GM10248 (cell line): ENCODE measurements at regions of chr9 and their contacts with region 1.

Region 1: DNA sequence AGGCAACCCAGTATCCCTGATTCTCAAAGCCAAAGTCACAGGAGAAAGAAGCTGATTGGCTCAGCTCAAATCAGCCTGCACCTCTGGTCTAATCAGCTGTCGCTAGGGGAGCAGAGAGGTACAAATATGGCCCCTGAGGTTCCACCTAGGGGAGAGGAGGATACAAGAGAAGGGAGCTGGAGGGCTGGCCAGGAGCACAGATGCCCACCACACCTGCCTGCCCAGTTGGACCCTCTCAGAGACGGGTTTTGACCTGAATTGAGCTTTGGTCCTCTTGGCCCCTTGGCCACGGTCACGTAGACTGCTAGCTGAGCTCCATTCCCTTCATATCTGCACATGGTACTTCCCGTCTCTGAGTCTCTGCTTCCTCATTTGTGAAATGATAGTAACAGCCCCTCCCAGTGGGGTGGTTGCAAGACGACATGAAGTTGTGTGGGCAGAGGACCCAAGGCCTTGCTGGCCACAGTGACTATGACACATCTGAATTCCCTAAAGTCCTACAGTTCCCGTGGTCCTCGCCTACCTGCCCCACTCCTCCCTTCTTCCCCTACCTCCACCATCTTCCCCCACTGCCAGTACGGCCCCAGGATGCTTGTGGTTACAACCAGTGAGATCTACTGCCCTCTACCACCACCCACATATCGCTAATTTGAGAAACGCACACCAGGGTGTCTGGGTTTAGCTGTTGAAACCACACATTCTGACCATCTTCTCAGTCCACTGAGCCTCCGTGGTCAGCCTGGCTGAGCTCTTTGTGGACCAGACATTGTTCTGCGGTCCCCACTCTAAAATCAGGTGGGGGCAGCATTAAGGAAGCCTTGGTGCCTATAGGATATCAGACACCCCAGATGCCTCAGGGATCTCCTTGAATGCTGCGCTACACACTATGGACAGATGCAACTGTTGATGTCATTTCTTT is 60.3 kb upstream of the NEK6 start:
- DNase-seq: peak; percentile 75
- CTCF ChIP-seq: peak; percentile 17

Region 2: DNA sequence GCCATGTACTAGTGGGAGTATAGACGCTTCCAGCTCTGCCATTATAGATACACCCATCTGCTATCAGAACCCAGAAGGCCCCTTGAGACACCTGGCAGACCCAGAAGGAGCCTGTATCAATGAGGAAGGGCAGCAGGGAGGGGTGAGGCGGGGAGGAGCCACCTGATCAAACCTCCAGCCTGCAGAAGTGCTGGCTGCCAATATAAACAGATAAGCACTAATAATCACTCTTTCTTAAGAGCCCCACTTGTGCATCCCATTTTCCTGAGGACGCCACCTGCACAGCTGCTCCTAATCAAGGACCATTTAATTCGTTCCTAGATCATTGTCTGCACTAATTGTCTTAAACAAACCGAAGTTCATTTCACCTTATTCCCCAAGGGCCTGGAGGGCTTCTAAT is 14.7 kb before region 1 on chr9:
- CTCF ChIA-PET with region 1: interaction called, 15 read pairs
- POLR2A ChIA-PET with region 1: no interaction called
- DNase-seq: no peak
- CTCF ChIP-seq: no peak

Region 3: DNA sequence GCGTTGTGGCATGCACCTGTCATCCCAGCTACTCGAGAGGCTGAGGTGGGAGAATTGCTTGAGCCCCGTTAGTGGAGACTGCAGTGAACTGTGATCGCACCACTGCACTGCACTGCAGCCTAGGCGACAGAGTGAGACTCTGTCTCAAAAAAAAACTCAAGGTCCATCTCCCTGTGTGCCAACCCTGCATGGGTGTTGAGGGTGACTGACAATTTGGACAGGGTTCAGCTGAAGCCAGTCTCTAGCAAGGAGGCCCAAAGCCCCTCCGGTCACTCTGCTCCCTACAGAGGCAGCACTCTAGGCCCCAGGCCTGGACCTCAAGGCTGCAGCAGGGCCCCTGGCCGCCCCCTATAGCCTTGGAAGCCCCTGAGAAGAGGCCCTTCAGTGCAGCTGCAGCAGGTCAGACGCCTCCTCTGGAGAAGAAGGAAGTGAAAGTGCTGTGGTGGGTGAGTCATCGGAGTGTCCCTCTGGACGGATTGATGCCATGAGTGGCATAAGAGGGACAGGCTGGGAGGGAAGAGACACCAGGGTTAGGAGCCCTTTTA is 21.1 kb after region 1 on chr9:
- CTCF ChIA-PET with region 1: interaction called, 11 read pairs
- POLR2A ChIA-PET with region 1: interaction called, 3 read pairs
- DNase-seq: peak; percentile 85
- CTCF ChIP-seq: no peak

Region 4: GRCh38 chr9:124257844-124258606 is 60.6 kb after region 1 on chr9 and contains the start of gene NEK6:
- CTCF ChIA-PET with region 1: no interaction called
- POLR2A ChIA-PET with region 1: no interaction called
- DNase-seq: peak; percentile 70
- CTCF ChIP-seq: no peak